CD14-positive monocyte (primary cell): ENCODE measurements at regions of chr1 and their contacts with region 1.

Region 1: DNA sequence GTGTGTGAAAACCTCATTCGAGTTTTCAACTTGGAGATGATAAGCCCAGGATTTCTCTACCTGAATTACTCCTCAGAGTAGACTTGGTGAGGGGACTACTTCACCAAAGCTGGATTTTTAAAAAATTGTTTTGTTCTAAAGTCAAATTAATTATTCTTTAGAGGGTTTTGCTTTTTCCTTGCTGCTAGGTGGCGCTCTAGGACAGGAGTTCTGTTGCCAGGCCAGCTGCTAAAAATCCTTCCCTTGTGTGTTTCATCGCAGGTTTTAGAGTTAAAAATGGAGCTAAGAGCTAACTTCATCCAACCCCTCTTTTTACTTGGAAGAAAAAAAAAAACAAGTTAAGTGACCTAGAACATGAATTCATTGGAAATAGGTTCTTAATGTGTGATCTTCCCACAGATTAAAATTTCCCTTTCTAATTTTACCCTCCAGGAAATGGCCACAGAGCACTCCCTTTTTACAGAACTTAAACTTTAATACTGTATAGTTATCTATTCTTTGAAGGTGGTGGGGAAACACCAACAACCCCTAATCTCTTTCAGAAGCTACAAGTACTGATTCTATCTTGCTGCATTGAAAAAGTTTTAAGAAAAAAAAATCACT is 36.7 kb upstream of the FAM163A start:
- DNase-seq: peak; percentile 13 to 39 (median 17)
- H3K4me3 ChIP-seq: no peak overlapping the region
- H3K4me3 Mint-ChIP-seq: no peak overlapping the region
- H3K27ac ChIP-seq: no peak overlapping the region
- H3K27ac Mint-ChIP-seq: no peak overlapping the region
- H3K4me1 ChIP-seq: no peaks in the 10 kb centered on the region
- H3K4me1 Mint-ChIP-seq: peaks cover 3% of the 10 kb centered on the region
- H3K27me3 ChIP-seq: no peaks in the 10 kb centered on the region
- H3K27me3 Mint-ChIP-seq: peaks cover 0 to 4% (median 0%) of the 10 kb centered on the region in 3 donors
- CTCF ChIP-seq: peak; percentile 73

Region 2: GRCh38 chr1:179809506-179810366 is 103.3 kb after region 1 on chr1:
- intact Hi-C with region 1: loop called in 1 of 2 experiments (anchors 2 kb)
- DNase-seq: peak; percentile 47 to 63 (median 62)
- H3K4me3 ChIP-seq: no peak overlapping the region
- H3K4me3 Mint-ChIP-seq: no peak overlapping the region
- H3K27ac ChIP-seq: no peak overlapping the region
- H3K27ac Mint-ChIP-seq: no peak overlapping the region
- H3K4me1 ChIP-seq: peaks cover 5 to 7% of the 10 kb centered on the region in 2 donors
- H3K4me1 Mint-ChIP-seq: peaks cover 9% of the 10 kb centered on the region
- H3K27me3 ChIP-seq: no peaks in the 10 kb centered on the region
- H3K27me3 Mint-ChIP-seq: peaks cover 5 to 12% (median 9%) of the 10 kb centered on the region in 3 donors
- CTCF ChIP-seq: peak; percentile 87

Region 3: GRCh38 chr1:179816196-179816960 is 109.9 kb after region 1 on chr1:
- intact Hi-C with region 1: loop called (anchors 2 to 5 kb)
- DNase-seq: no peak
- H3K4me3 ChIP-seq: no peak overlapping the region
- H3K4me3 Mint-ChIP-seq: peak overlapping the region in 1 of 2 donors; percentile 21
- H3K27ac ChIP-seq: no peak overlapping the region
- H3K27ac Mint-ChIP-seq: no peak overlapping the region
- H3K4me1 ChIP-seq: peaks cover 11 to 18% of the 10 kb centered on the region in 2 donors
- H3K4me1 Mint-ChIP-seq: peaks cover 29% of the 10 kb centered on the region
- H3K27me3 ChIP-seq: peaks cover 0 to 2% of the 10 kb centered on the region in 2 donors
- H3K27me3 Mint-ChIP-seq: peaks cover 15 to 22% (median 19%) of the 10 kb centered on the region in 3 donors
- CTCF ChIP-seq: no peak